ENCODE measurements at regions of chr10 and their contacts with region 1.

Region 1: DNA sequence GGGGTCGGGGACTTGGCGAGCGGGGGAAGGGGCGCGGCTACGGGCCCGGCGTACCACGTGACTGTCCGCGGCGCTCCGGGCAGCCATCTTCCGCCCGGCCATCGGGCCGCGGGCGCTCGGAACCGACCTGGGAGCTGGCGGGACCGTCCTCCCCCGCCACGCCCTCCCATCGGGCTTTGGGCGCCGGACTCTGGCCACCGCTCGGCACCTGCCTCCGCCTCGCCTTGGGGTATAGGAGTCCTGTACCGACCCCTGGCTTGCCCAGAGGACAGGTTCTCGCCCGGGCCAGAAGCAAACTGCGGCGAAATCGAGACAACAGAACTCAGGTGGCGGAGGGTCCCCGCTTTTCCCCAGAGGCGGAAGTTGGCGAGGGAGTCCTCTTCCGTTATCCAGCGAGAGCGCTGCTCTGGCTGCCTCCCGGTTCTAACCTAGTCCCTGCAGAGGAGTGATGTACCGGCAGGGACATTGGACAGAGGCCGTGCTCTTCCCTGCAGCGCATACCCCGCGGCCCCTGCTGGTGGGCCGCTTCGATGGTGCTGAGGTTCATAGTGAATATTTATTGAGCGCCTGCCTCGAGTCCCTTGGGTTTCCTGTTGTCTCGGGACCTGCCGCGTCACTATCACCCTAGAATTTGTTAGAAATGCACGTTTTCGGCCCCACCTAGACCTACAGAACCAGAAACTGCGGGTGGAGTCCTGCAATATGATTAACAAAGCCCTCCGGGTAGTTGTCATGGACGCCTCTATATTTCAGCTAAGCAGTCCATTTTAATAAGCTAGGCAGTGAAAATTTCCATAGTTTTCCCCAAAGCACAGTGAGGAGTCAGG is 1.3 kb upstream of the SGMS1 start:
- DNase-seq: no peak
- ATAC-seq: peak; percentile 83
- H3K4me3 ChIP-seq: peak overlapping the region; percentile 93 to 96
- H3K27ac ChIP-seq: peak overlapping the region; percentile 94
- H3K4me1 ChIP-seq: peaks cover 23% of the 10 kb centered on the region
- H3K27me3 ChIP-seq: no peaks in the 10 kb centered on the region
- CTCF ChIP-seq: peak; percentile 59

Region 2: GRCh38 chr10:50367732-50368131 is 257.3 kb before region 1 on chr10:
- CTCF ChIA-PET with region 1: no interaction called
- POLR2A ChIA-PET with region 1: no interaction called
- in situ Hi-C with region 1: no loop called
- intact Hi-C with region 1: loop called (anchors 10 kb)
- DNase-seq: no peak
- ATAC-seq: peak; percentile 78
- H3K4me3 ChIP-seq: no peak overlapping the region
- H3K27ac ChIP-seq: no peak overlapping the region
- H3K4me1 ChIP-seq: no peaks in the 10 kb centered on the region
- H3K27me3 ChIP-seq: no peaks in the 10 kb centered on the region
- CTCF ChIP-seq: peak; percentile 65

Region 3: GRCh38 chr10:50407077-50407801 is 217.8 kb before region 1 on chr10:
- CTCF ChIA-PET with region 1: no interaction called
- POLR2A ChIA-PET with region 1: no interaction called
- in situ Hi-C with region 1: no loop called
- intact Hi-C with region 1: no loop called
- DNase-seq: no peak
- ATAC-seq: no peak
- H3K4me3 ChIP-seq: no peak overlapping the region
- H3K27ac ChIP-seq: no peak overlapping the region
- H3K4me1 ChIP-seq: no peaks in the 10 kb centered on the region
- H3K27me3 ChIP-seq: no peaks in the 10 kb centered on the region
- CTCF ChIP-seq: no peak

Region 4: DNA sequence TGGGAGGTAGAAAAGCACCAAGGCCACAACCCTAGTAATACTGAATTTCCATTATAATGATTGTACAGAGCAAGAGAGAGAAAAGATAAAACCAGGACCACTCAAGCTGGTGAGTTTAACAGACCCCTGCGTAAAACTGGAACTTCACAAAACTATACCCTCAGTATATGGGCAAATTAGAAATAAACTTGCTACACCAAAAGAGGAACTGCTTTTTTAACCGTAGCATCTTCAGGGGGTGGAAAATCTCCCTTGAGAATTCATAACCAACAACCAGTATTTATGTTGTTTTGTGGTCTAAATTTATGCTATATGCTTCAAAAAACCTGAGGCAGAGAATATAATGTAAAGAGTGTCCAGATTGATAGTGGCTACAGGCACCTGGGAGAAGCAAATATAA is 172.5 kb before region 1 on chr10:
- CTCF ChIA-PET with region 1: no interaction called
- POLR2A ChIA-PET with region 1: no interaction called
- in situ Hi-C with region 1: no loop called
- intact Hi-C with region 1: loop called (anchors 10 kb)
- DNase-seq: no peak
- ATAC-seq: no peak
- H3K4me3 ChIP-seq: no peak overlapping the region
- H3K27ac ChIP-seq: no peak overlapping the region
- H3K4me1 ChIP-seq: no peaks in the 10 kb centered on the region
- H3K27me3 ChIP-seq: no peaks in the 10 kb centered on the region
- CTCF ChIP-seq: no peak

Region 5: GRCh38 chr10:50497757-50498156 is 127.3 kb before region 1 on chr10:
- CTCF ChIA-PET with region 1: no interaction called
- POLR2A ChIA-PET with region 1: no interaction called
- in situ Hi-C with region 1: no loop called
- intact Hi-C with region 1: no loop called
- DNase-seq: no peak
- ATAC-seq: peak; percentile 42; the same call in 1 of the 2 replicates
- H3K4me3 ChIP-seq: no peak overlapping the region
- H3K27ac ChIP-seq: no peak overlapping the region
- H3K4me1 ChIP-seq: no peaks in the 10 kb centered on the region
- H3K27me3 ChIP-seq: no peaks in the 10 kb centered on the region
- CTCF ChIP-seq: no peak

Region 6: DNA sequence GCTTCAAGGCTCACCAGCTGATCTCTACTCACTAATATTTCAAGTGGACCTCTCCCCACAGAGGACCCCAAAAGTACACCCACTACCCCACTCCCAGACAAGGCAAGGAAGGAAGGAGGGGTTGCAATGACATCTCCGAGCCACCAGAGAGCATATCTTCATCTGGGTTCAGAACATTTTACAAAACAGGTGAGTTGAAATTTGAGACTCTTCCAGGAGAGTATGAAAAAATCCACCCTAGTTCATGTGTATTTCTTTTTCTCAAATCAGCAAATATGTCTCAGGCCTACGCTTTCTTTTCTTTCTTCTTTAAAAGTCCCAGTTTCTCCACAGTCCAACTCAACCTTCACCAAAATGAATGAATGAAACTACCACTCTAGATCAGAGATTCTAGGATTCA is 63.3 kb before region 1 on chr10:
- CTCF ChIA-PET with region 1: no interaction called
- POLR2A ChIA-PET with region 1: no interaction called
- in situ Hi-C with region 1: no loop called
- intact Hi-C with region 1: loop called (anchors 2 kb)
- DNase-seq: no peak
- ATAC-seq: peak; percentile 68; the same call in 1 of the 2 replicates
- H3K4me3 ChIP-seq: no peak overlapping the region
- H3K27ac ChIP-seq: no peak overlapping the region
- H3K4me1 ChIP-seq: peaks cover 13% of the 10 kb centered on the region
- H3K27me3 ChIP-seq: no peaks in the 10 kb centered on the region
- CTCF ChIP-seq: peak; percentile 79

Region 7: DNA sequence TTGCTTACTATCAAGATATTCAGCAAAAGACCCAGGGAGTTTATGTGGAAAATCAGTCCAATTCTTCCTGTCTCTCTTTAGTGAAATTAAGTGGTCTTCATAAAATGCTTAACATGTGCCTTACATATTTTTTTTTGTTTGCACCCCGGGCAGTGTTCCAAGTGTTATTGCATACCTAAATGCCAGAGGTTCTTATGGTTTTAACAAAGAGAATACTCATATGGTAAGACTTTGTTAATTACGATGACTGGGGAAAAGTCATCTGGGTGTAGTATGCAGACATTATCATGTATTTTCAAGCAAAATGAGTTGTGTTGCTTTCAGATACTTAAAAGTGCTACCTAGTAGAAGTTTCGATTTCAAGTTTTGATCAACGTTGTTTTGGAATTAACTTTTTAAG is 531.8 kb after region 1 on chr10:
- CTCF ChIA-PET with region 1: no interaction called
- POLR2A ChIA-PET with region 1: no interaction called
- in situ Hi-C with region 1: no loop called
- intact Hi-C with region 1: no loop called
- DNase-seq: no peak
- ATAC-seq: no peak
- H3K4me3 ChIP-seq: no peak overlapping the region
- H3K27ac ChIP-seq: no peak overlapping the region
- H3K4me1 ChIP-seq: no peaks in the 10 kb centered on the region
- H3K27me3 ChIP-seq: no peaks in the 10 kb centered on the region
- CTCF ChIP-seq: no peak